Posterior vena cava (tissue), 2 donors: ENCODE measurements at regions of chr14 and their contacts with region 1.

Region 1: GRCh38 chr14:39683691-39684090 is 251.5 kb upstream of the FBXO33 start:
- DNase-seq: no peak

Region 2: DNA sequence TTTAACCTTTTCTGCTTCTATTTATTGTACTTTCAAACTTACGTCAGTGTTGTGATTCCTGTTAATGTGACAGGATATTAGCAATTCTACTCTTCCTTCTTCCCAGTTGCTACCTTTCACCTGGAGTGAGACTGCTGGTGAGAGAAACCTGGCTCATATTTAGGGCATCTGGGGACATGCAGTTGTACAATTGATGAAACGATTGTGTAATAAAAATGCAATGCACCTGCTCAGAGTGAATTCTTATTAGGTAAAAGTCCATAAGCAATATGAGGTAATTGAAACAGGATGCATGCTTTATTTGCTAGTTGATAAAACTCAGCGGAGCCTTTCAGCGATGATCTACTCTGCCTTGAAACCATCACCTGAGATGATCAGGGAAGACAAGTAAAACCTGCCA is 135.3 kb before region 1 on chr14:
- intact Hi-C with region 1: no loop called
- DNase-seq: no peak

Region 3: GRCh38 chr14:39716987-39717570 is 33.4 kb after region 1 on chr14:
- intact Hi-C with region 1: no loop called
- DNase-seq: no peak

Region 4: GRCh38 chr14:39731912-39732311 is 48.2 kb after region 1 on chr14:
- intact Hi-C with region 1: loop called in 1 of 2 experiments (anchors 2 kb)
- DNase-seq: no peak